ENCODE measurements at regions of chr9 and their contacts with region 1.

Region 1: GRCh38 chr9:89483592-89484522 is 14.1 kb downstream of the SEMA4D start:
- DNase-seq: peak; percentile 95
- H3K4me3 ChIP-seq: peak overlapping the region in 6 of 8 donors; percentile 19 to 67 (median 34)
- H3K27ac ChIP-seq: peak overlapping the region in 4 of 8 donors; percentile 45 to 83 (median 62)
- H3K4me1 ChIP-seq: peaks cover 22 to 95% (median 76%) of the 10 kb centered on the region in 6 donors
- H3K27me3 ChIP-seq: no peaks in the 10 kb centered on the region
- CTCF ChIP-seq: no peak
- POLR2A ChIP-seq: no peak

Region 2: DNA sequence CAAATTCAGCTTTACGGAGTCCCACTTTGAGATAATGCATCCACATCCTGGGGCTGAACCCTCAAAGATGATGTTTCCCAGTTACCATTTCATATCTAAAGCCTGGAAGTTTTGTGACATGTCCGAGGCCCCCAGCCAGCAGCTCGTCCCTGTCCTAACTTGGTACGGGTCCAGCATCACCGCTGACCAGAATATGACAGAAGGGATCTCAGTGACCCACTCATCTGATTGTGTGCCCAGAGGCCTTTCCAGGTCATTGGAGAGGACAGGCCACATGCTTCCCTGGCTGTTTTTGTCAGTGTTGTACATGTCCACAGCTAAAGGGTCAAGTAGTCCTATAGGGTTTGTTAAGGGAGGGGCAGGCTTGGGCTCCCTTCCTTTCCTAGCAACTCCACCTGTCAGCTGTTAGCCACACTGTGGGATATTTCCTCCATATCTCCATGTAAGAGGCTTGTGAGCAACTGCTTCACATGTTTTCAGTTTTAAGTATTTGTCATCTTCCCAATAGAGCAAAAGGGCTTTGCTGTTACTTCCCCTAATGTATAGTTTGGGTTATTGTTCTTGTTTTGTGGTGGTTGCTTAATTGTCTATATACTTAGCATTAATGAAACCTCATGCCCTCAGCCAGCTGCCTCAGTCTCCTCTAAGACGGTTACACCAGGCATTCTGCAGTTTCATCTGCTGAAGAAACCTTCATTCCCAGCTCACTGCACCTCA is 132.1 kb before region 1 on chr9:
- intact Hi-C with region 1: no loop called
- DNase-seq: no peak
- H3K4me3 ChIP-seq: no peak overlapping the region
- H3K27ac ChIP-seq: peak overlapping the region; percentile 44 to 77 (median 52)
- H3K4me1 ChIP-seq: peaks cover 11 to 43% (median 23%) of the 10 kb centered on the region in 6 donors
- H3K27me3 ChIP-seq: no peaks in the 10 kb centered on the region
- CTCF ChIP-seq: no peak
- POLR2A ChIP-seq: no peak

Region 3: GRCh38 chr9:89549031-89549644 is 65.3 kb after region 1 on chr9:
- intact Hi-C with region 1: loop called (anchors 10 kb)
- DNase-seq: peak; percentile 96
- H3K4me3 ChIP-seq: no peak overlapping the region
- H3K27ac ChIP-seq: peak overlapping the region in 3 of 8 donors; percentile 31 to 59 (median 38)
- H3K4me1 ChIP-seq: peaks cover 0 to 30% (median 17%) of the 10 kb centered on the region in 6 donors
- H3K27me3 ChIP-seq: no peaks in the 10 kb centered on the region
- CTCF ChIP-seq: peak; percentile 94 to 99 (median 96)
- POLR2A ChIP-seq: no peak

Measured in spleen (tissue), 13 donors.